IMR-90 (cell line): ENCODE measurements at regions of chr3 and their contacts with region 1.

Region 1: GRCh38 chr3:182792901-182793662 is at the start of gene ATP11B:
- DNase-seq: peak; percentile 41
- ATAC-seq: peak; percentile 87
- H3K4me3 ChIP-seq: peak within 1 kb of the TSS; percentile 78
- H3K27ac ChIP-seq: peak within 1 kb of the TSS; percentile 92
- H3K4me1 ChIP-seq: no peaks in the 10 kb centered on the region
- H3K27me3 ChIP-seq: peaks cover 2% of the 10 kb centered on the region; the same call in 1 of the 2 replicates
- CTCF ChIP-seq: no peak
- POLR2A ChIP-seq: no peak; the same call in 1 of the 2 replicates
- RAD21 ChIP-seq: no peak
- total RNA-seq, gene ATP11B: 39.6 and 66.4 TPM in 2 replicates

Region 2: DNA sequence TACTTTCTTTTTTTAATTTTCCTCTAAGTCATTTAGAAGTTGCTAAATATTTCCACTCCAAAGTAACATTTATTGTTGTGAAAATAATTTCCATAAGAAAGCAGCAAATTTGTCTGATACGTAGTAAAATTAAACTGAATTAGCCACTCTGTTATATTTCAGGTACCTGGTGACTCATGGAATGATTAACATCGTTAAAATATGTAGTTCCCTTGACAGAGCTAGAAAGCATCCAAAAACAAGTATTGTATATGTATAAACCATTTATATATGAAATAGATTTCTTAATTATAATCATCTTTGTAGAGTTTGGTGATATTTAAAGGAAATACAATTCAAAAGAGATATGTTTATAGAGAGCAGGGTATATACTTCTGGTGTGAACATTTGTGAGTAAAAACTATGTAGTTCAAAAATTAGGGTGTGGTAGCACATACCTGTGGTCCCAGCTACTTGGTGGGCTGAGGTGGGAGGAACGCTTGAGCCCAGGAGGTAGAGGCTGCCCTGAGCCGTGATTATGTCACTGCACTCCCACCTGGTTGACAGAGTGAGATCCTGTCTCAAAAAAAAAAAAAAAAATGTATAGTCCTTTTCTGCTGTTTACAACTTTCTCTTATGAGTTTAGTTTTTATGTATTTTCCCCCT is 36.8 kb after region 1 on chr3:
- CTCF ChIA-PET with region 1: no interaction called
- POLR2A ChIA-PET with region 1: no interaction called
- dilution Hi-C with region 1: no loop called
- in situ Hi-C with region 1: loop called (anchors 5 kb)
- intact Hi-C with region 1: loop called (anchors 5 kb)
- DNase-seq: no peak
- ATAC-seq: no peak
- H3K4me3 ChIP-seq: no peak overlapping the region
- H3K27ac ChIP-seq: no peak overlapping the region
- H3K4me1 ChIP-seq: no peaks in the 10 kb centered on the region
- H3K27me3 ChIP-seq: no peaks in the 10 kb centered on the region
- CTCF ChIP-seq: no peak
- POLR2A ChIP-seq: no peak
- RAD21 ChIP-seq: no peak

Region 3: GRCh38 chr3:182837855-182838454 is 44.9 kb after region 1 on chr3:
- CTCF ChIA-PET with region 1: interaction called, 3 read pairs
- POLR2A ChIA-PET with region 1: no interaction called
- dilution Hi-C with region 1: no loop called
- in situ Hi-C with region 1: loop called (anchors 5 kb)
- intact Hi-C with region 1: loop called (anchors 5 kb)
- DNase-seq: peak; percentile 48
- ATAC-seq: peak; percentile 35; the same call in 1 of the 2 replicates
- H3K4me3 ChIP-seq: no peak overlapping the region
- H3K27ac ChIP-seq: no peak overlapping the region
- H3K4me1 ChIP-seq: no peaks in the 10 kb centered on the region
- H3K27me3 ChIP-seq: no peaks in the 10 kb centered on the region
- CTCF ChIP-seq: peak; percentile 45
- POLR2A ChIP-seq: no peak
- RAD21 ChIP-seq: peak; percentile 46; the same call in 1 of the 2 replicates

Region 4: DNA sequence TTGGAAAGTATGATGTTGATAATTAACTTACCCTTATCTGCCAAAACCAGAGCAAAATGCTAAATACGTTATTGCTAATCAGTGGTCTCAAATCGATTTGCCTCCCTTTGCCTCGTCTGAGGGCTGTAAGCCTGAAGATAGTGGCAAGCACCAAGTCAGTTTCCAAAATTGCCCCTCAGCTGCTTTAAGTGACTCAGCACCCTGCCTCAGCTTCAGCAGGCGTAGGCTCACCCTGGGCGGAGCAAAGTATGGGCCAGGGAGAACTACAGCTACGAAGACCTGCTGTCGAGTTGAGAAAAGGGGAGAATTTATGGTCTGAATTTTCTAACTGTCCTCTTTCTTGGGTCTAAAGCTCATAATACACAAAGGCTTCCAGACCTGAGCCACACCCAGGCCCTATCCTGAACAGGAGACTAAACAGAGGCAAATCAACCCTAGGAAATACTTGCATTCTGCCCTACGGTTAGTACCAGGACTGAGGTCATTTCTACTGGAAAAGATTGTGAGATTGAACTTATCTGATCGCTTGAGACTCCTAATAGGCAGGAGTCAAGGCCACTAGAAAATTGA is 127.5 kb after region 1 on chr3:
- CTCF ChIA-PET with region 1: no interaction called
- POLR2A ChIA-PET with region 1: no interaction called
- dilution Hi-C with region 1: no loop called
- in situ Hi-C with region 1: no loop called
- intact Hi-C with region 1: no loop called
- DNase-seq: no peak
- ATAC-seq: no peak
- H3K4me3 ChIP-seq: no peak overlapping the region
- H3K27ac ChIP-seq: no peak overlapping the region
- H3K4me1 ChIP-seq: no peaks in the 10 kb centered on the region
- H3K27me3 ChIP-seq: no peaks in the 10 kb centered on the region
- CTCF ChIP-seq: no peak
- POLR2A ChIP-seq: no peak
- RAD21 ChIP-seq: no peak